Posterior vena cava (tissue), 2 donors: ENCODE measurements at regions of chr12 and their contacts with region 1.

Region 1: DNA sequence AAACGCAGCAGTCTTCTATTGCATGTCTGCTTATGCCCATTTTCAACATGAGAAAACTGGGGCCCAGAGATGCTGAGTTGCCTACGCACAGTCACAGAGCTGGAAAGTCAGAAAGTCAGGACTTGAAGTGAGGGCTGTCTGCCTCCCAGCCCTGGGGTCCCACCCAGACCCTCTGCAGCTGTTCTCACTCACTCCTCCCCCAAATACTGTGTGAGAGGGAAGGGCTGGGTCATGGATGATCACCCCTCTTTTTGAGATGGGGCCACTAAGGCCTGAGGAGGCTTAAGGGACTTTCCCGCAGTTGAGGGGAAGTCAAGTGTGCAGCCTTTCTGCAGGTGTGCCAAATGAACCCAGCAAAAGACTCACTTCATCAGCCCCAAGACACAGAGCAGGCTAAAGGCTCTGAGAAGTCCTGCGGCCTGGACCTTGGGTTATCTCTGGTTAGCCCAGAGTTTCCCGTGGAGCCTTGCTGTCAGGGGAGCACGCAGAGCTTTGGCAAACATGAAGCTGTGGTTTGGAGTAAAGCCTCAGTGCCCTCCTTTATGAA is 18.7 kb downstream of the DTX1 start:
- DNase-seq: peak; percentile 44

Region 2: DNA sequence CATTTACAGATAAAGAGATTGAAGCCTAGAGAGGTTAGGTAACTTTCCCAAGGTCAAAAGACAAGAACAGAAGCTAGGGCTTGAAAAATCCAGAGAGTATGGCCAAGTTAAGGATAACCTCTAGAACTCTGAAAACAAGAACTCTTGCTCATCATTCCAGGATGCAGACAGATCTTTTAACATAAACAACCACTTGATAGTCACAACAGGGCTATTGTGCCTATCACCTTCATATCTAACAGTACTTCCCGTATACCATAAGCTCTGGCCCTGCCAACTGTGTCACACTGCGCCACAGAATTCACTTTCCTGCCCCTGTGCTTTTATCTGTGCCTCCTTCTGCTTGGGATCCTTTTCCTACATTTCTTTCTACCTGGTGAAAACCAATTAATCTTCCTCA is 1043.7 kb before region 1 on chr12:
- intact Hi-C with region 1: no loop called
- DNase-seq: no peak

Region 3: GRCh38 chr12:113105606-113106271 is 30.5 kb after region 1 on chr12:
- intact Hi-C with region 1: loop called in 1 of 2 experiments (anchors 2 kb)
- DNase-seq: no peak

Region 4: DNA sequence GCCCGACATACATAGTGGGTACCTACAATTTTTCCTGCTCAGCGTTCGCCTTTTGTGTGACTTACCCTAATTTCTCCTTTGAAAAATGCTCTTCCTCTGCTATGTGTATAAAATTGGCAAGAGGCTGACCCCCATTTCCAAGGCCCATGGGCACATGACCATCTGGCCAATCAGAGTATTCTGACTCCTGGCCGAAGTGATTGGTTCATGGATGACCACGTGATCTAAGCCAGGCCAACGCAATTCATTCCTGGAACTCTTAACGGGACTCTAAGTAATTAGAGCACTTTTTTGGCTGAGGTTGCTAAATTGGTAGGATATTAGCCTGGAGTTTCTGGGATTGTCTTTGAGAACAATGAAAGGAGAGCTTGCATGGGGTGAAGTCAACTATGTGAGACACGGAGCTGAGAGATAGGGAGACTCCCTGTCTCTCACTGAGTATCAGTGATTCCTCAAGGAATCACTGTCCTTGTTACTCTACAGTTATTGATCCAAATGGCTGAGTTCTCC is 1718.9 kb after region 1 on chr12:
- intact Hi-C with region 1: no loop called
- DNase-seq: no peak